BJ (cell line): ENCODE measurements at regions of chr17 and their contacts with region 1.

Region 1: DNA sequence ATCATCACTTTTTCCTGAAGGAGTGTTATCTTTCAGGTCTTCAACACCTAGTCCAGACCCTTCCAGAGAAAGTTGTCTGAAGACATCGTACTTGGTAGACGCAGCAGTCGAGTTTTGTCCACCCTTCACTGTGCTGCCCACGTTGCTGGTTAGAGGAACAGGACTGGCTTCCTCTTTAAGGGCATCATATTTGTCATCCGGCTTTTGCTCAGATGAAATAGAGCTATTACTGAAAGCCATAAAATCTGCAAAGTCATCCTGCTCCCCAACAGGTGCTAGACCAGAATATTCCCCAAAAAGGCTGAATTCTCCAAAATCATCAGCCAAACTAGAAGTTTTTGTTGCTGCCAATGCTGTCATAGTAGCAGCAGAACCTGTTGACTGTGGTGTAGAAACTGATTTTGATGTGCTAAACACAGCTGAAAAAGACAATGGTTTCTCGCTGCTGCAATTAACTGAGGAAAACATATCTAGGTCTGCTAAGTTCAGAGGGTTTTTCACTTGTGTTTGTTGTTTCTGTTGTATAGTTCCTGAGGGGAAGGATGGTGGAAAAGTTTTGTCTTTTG is 55.7 kb downstream of the SYNRG start:
- DNase-seq: no peak
- H3K4me3 ChIP-seq: no peak overlapping the region
- H3K27me3 ChIP-seq: no peaks in the 10 kb centered on the region
- CTCF ChIP-seq: no peak

Region 2: DNA sequence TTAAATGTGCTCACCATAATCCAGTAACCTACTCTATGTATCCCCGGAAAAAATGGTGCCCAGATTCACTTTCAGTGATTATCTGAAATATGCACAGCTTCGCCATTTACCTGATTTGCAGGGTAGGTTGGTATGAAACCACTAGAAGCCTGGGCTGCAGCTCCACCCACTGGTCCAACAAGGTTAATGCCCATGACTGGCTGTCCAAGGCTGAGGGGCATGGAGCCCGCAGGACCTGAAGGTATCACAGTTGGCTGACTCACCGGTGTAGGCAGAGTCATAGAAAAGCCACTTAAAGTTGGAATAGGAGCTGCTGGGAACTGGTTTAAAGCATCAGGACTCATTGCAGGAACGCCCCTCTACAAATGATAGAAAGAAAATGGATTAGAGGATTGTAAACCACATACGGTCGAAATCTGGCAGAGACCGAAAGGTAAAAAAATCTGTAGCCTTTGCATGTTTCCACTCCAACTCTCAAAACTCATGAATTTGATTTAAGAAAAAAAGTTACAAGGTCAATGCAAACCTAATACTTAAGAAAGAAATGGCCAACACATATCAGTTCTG is 17.1 kb after region 1 on chr17:
- CTCF ChIA-PET with region 1: interaction called, 14 read pairs
- POLR2A ChIA-PET with region 1: no interaction called
- DNase-seq: no peak
- H3K4me3 ChIP-seq: no peak overlapping the region
- H3K27me3 ChIP-seq: no peaks in the 10 kb centered on the region
- CTCF ChIP-seq: peak; percentile 66